Aorta (tissue), 5 donors: ENCODE measurements at regions of chr2 and their contacts with region 1.

Region 1: DNA sequence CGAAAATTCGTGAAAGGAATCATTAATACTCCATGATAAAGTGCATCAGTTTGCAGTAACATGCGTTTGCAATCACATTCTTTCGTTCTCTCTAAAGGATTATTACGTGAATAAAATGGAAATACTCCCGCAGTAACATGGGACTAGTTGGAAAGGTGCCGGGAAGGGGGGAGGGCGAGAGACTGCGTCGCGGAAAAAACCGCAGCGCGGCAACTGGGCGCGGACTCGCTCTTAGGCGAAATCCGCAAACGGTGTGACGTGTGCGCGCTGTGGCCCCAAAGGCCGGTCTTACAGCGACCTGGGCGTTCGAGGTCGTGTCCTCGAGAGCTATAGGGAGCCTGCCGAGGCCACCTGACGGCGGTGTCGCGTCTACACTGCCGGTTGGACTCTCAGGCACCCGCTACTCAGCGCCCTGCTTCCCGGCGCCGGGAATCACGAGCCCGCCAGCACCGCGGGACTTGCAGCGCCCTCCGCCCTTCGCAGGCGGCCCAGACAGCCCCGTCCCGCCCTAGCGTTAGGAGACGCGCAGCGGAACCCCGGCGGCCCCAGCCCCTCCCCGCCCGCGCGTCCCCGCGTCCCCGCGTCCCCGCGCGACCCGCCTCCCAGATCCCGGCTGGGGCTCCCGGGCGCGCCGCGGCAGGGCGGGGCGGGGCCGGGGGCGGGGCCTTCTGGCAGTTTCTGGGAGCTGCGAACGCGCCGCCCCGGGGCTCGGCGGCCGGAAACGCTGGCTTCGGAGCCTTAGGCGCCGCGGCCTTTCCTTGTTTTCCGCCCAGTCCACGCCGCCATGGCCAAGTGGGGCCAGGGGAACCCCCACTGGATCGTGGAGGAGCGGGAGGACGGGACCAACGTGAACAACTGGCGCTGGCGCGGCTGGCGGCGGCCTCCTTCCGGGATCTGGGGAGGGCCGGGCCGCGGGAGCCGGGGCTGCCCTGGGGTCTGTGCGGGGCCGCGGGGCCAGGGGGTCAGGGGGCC is 15.1 kb downstream of the C2orf74 start:
- DNase-seq: peak; percentile 96 to 98
- ATAC-seq: peak; percentile 95
- H3K4me3 ChIP-seq: peak overlapping the region; percentile 51 to 88
- H3K27ac ChIP-seq: peak overlapping the region; percentile 96 to 97
- H3K4me1 ChIP-seq: peaks cover 5% of the 10 kb centered on the region in 2 donors
- H3K27me3 ChIP-seq: no peaks in the 10 kb centered on the region

Region 2: GRCh38 chr2:60881047-60881932 is 295.8 kb before region 1 on chr2 and contains the start of gene REL:
- intact Hi-C with region 1: loop called in 1 of 2 experiments (anchors 10 kb)
- DNase-seq: peak; percentile 96 to 97
- ATAC-seq: peak; percentile 98
- H3K4me3 ChIP-seq: peak within 1 kb of the TSS; percentile 87 to 97
- H3K27ac ChIP-seq: peak within 1 kb of the TSS; percentile 59 to 83
- H3K4me1 ChIP-seq: peaks cover 0 to 6% of the 10 kb centered on the region in 2 donors
- H3K27me3 ChIP-seq: no peaks in the 10 kb centered on the region
- total RNA-seq, gene REL: 16.0 to 23.8 TPM

Region 3: GRCh38 chr2:61125123-61125710 is 51.8 kb before region 1 on chr2:
- intact Hi-C with region 1: no loop called
- DNase-seq: no peak
- ATAC-seq: no peak
- H3K4me3 ChIP-seq: no peak overlapping the region
- H3K27ac ChIP-seq: no peak overlapping the region
- H3K4me1 ChIP-seq: no peaks in the 10 kb centered on the region
- H3K27me3 ChIP-seq: no peaks in the 10 kb centered on the region

Region 4: DNA sequence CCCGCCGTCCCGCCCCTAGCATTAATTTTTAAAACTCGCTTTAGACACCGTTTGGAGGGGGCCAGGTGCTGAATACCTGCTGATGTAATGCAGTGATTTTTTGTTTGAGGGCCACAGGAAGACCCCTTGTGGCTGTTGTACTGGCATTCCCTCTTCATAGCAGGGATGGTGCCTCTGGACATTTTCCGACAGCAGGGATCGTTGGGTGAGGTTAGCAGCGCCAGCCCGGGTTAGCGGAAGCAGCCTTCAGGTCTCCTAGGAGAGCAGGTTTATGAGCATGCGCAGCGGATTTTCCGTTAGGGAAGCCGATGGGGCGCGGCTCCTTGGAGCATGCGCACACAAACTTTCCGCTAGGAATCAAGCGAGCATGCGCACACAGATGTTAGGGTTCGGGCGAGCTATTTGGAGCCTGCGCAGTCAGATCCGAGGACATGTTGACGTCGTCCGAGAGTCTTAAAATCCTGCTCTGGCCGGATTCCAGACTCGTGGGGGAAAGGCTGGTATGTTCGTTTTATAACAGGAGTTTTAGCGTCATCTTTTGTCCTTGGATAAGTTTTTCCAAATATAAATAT is 32.3 kb before region 1 on chr2:
- intact Hi-C with region 1: loop called (anchors 2 to 5 kb)
- DNase-seq: peak; percentile 97 to 98
- ATAC-seq: peak; percentile 97
- H3K4me3 ChIP-seq: peak overlapping the region; percentile 52 to 83
- H3K27ac ChIP-seq: peak overlapping the region in 1 of 2 donors; percentile 67
- H3K4me1 ChIP-seq: no peaks in the 10 kb centered on the region
- H3K27me3 ChIP-seq: no peaks in the 10 kb centered on the region

Region 5: DNA sequence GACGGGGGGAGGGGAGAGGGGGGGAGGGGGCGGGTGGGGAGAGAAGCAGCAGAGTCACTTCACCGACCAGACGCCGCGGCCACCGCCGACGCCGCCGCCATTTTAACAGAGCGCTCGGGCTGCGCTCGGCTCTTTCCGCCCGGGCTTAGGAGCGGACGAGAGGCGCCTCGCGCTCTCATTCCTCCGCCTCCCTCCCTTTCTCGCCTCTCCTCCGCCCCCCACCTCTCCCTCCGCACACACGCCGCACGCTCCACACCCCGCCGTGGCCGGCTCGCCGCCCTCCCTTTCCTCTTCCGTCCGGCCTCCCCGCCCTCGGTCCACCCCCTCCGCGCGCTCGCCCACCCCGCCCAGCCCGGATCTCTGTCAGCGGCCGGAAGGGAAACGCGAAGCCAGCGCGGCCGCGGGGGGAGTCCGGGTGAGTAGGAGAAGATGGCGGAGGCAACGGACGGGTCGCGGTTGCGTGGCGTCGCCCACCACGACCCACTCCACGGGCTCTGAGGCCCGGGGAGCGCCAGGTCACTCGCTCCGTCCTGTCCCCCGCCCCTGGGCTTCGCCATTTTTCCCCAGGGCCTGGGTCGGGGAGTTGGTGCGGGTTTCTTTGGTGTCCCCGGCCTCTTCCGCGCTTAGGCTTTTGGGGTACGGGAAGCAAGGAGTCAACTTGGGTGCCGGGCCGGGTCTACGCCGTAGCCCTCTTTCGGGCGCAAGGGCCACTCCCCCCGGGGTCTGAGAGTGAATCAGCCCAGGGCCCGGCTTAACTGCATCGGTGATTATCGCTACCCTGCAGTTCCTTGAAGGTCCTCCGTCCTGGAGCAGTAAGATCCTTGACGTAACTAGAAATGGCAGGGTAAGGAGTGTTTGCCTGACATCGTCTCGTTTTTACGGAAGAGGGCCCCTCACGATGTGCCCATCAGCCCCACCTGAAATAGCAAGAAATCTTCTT is 294.2 kb after region 1 on chr2 and contains the start of gene USP34:
- intact Hi-C with region 1: loop called in 1 of 2 experiments (anchors 5 kb)
- DNase-seq: peak; percentile 97 to 99
- ATAC-seq: peak; percentile 98
- H3K4me3 ChIP-seq: peak within 1 kb of the TSS; percentile 91 to 97
- H3K27ac ChIP-seq: peak within 1 kb of the TSS; percentile 91 to 93
- H3K4me1 ChIP-seq: no peaks in the 10 kb centered on the region
- H3K27me3 ChIP-seq: no peaks in the 10 kb centered on the region
- total RNA-seq, gene USP34: 128 to 146 TPM